Calu3 (cell line): ENCODE measurements at regions of chr3 and their contacts with region 1.

Region 1: DNA sequence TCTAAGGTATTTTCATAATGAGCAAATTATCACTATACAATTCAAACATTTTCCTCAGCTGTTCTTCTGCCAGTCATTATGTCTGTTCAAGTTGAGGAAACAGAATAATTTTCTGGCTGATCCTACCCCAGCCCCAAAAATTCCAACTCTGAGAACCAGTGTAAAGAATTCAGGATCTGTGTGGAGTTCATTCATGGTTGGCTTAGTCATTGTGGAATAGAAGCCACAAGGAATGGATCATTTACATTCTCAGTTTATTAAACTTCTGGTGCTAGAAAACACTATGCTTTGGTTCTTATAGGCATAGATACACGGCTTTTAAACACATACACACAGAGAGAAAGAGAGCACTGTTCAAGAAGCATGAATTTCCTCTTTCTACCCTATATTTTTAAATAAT is 134.6 kb downstream of the CMSS1 start:
- DNase-seq: no peak
- H3K4me3 Mint-ChIP-seq: no peak overlapping the region
- H3K27ac Mint-ChIP-seq: no peak overlapping the region
- H3K4me1 Mint-ChIP-seq: peaks cover 65% of the 10 kb centered on the region
- H3K27me3 Mint-ChIP-seq: no peaks in the 10 kb centered on the region
- CTCF ChIP-seq: no peak

Region 2: DNA sequence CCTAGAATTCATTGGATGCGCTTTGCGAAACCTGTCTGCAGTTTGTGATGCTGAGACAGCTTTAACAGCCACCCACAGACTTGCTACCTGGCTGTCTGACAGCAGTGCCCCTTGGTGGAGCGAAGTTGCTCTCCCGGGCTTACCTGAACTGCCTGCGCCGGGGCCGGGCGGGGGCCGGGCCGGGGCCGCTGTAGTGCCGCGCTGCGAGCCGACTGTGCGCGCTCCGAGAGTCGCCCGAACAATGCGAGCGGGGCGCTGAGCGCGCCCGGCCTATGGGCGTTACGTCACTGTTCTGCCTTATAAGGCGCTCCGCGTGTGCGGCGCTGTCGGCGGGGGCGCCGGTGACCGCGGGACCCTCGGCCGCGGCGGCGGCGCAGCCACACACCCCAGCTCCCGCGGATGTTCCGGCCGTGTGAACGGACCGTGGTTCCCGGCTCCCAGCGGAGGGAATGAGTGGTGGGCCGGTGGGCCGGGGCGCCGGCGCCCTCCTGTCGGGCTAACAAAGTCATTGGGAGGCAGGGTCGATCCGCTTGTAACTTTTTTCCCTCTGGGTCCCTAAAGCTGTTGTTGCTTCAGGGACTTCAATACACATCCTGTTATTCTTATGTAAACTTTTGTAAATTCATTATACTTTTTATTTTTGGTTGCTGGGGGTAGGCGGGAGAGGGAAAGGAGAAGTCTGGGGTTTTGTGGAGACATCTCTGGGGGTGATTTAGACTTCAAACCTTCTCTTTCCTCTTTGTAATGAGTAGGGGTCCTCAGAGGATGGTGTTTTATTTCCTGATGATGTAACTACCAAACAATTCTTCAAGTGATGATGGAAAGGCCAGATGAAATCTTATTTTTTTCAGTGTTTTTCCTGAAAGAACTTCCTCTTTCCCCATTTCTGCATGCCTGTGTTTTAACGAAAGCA is 76.1 kb before region 1 on chr3:
- CTCF ChIA-PET with region 1: no interaction called
- intact Hi-C with region 1: loop called (anchors 5 kb)
- DNase-seq: peak; percentile 71
- H3K4me3 Mint-ChIP-seq: peak overlapping the region; percentile 73
- H3K27ac Mint-ChIP-seq: peak overlapping the region; percentile 79
- H3K4me1 Mint-ChIP-seq: peaks cover 29% of the 10 kb centered on the region
- H3K27me3 Mint-ChIP-seq: no peaks in the 10 kb centered on the region
- CTCF ChIP-seq: no peak

Region 3: DNA sequence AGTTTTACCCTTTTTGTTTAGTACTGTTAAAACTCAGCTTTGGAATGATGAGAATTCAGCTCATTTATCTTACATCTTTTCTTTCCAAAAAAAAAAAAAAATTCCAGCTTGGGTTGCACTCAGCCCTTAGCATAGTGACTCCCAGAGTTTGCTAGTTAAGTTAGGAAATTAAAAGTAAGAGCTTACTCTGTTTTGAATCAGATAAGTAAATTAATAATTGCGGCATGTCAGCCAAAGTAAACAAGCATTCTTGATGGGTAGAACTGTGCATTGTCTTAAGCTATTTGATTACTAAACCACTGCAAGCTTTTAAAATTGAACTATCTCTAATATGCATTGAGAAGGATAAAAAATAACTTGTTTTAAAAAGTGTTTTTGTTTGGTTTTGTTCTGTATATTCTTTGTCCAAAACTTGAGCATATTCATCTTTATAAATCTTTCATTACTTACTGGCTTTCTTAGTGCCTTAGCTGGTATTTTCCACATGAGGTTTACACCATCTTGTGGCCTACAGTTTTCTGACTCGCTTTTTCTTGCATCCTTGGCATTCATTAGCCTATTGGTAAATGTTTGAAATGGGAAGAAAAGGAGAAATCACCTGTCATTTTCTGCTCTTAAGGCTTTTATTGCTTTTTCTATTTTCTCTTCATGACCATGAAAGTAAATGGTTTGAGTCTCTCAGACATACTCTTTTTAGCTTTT is 54.4 kb after region 1 on chr3:
- CTCF ChIA-PET with region 1: interaction called, 4 read pairs
- intact Hi-C with region 1: loop called (anchors 5 kb)
- DNase-seq: no peak
- H3K4me3 Mint-ChIP-seq: no peak overlapping the region
- H3K27ac Mint-ChIP-seq: peak overlapping the region; percentile 62
- H3K4me1 Mint-ChIP-seq: peaks cover 72% of the 10 kb centered on the region
- H3K27me3 Mint-ChIP-seq: no peaks in the 10 kb centered on the region
- CTCF ChIP-seq: no peak

Region 4: GRCh38 chr3:100047455-100048141 is 95.3 kb after region 1 on chr3:
- CTCF ChIA-PET with region 1: interaction called, 3 read pairs
- intact Hi-C with region 1: loop called (anchors 10 kb)
- DNase-seq: peak; percentile 37
- H3K4me3 Mint-ChIP-seq: peak overlapping the region; percentile 49
- H3K27ac Mint-ChIP-seq: peak overlapping the region; percentile 84
- H3K4me1 Mint-ChIP-seq: peaks cover 57% of the 10 kb centered on the region
- H3K27me3 Mint-ChIP-seq: no peaks in the 10 kb centered on the region
- CTCF ChIP-seq: no peak